HepG2 (cell line): ENCODE measurements at regions of chr16 and their contacts with region 1.

Region 1: GRCh38 chr16:49061137-49061714 is 220.4 kb downstream of the CBLN1 start:
- DNase-seq: no peak
- ATAC-seq: no peak
- H3K4me3 ChIP-seq: no peak overlapping the region
- H3K27ac ChIP-seq: no peak overlapping the region
- H3K4me1 ChIP-seq: no peaks in the 10 kb centered on the region
- H3K27me3 ChIP-seq: peaks cover 0 to 6% of the 10 kb centered on the region in 2 experiments; a peak in 3 of 5 replicates
- CTCF ChIP-seq: no peak
- EP300 ChIP-seq: no peak
- POLR2A ChIP-seq: no peak
- RAD21 ChIP-seq: no peak

Region 2: GRCh38 chr16:49350265-49351095 is 289.3 kb after region 1 on chr16:
- CTCF ChIA-PET with region 1: no interaction called
- POLR2A ChIA-PET with region 1: no interaction called
- in situ Hi-C with region 1: loop called (anchors 10 kb)
- intact Hi-C with region 1: no loop called
- DNase-seq: peak; percentile 37
- ATAC-seq: peak; percentile 76
- H3K4me3 ChIP-seq: no peak overlapping the region
- H3K27ac ChIP-seq: no peak overlapping the region
- H3K4me1 ChIP-seq: no peaks in the 10 kb centered on the region
- H3K27me3 ChIP-seq: no peaks in the 10 kb centered on the region
- CTCF ChIP-seq: peak; percentile 96
- EP300 ChIP-seq: no peak
- POLR2A ChIP-seq: no peak
- RAD21 ChIP-seq: peak; percentile 76